ENCODE measurements at regions of chr16 and their contacts with region 1.

Region 1: DNA sequence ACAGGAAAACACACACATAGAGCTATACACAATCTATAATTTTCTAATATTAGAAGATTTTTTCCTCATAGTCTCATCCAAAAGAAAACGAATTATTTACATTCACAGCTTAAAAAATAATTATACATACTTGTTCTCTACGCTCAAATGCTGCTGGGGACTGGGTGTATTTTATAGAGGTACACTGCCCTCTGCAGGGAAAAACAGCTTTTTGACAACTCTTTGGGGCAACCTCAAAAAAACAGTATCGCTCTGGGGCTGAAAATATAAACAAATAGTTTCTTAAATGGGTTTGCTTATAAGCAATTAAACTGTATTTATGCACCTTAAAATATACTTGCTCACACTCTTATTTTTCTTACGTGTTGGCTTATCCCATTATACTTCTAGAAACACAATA is 261.8 kb upstream of the PSMD7 start:
- DNase-seq: no peak
- H3K4me3 ChIP-seq: no peak overlapping the region
- H3K27ac ChIP-seq: no peak overlapping the region
- H3K4me1 ChIP-seq: peaks cover 12 to 15% (median 14%) of the 10 kb centered on the region in 4 experiments; a peak in 6 of 7 replicates
- H3K27me3 ChIP-seq: no peaks in the 10 kb centered on the region
- CTCF ChIP-seq: peak in 2 of 3 experiments; percentile 48 to 56; a peak in 3 of 4 replicates
- EP300 ChIP-seq: no peak
- POLR2A ChIP-seq: no peak
- RAD21 ChIP-seq: peak; percentile 74 to 76

Region 2: GRCh38 chr16:73713778-73714495 is 320.9 kb before region 1 on chr16:
- CTCF ChIA-PET with region 1: interaction called, 15 read pairs
- POLR2A ChIA-PET with region 1: no interaction called
- DNase-seq: peak in 1 of 2 experiments; percentile 78
- H3K4me3 ChIP-seq: no peak overlapping the region
- H3K27ac ChIP-seq: no peak overlapping the region
- H3K4me1 ChIP-seq: peaks cover 0 to 8% (median 1%) of the 10 kb centered on the region in 4 experiments; a peak in 2 of 7 replicates
- H3K27me3 ChIP-seq: no peaks in the 10 kb centered on the region
- CTCF ChIP-seq: peak; percentile 46 to 73 (median 57)
- EP300 ChIP-seq: no peak
- POLR2A ChIP-seq: no peak
- RAD21 ChIP-seq: peak; percentile 53 to 60

Region 3: DNA sequence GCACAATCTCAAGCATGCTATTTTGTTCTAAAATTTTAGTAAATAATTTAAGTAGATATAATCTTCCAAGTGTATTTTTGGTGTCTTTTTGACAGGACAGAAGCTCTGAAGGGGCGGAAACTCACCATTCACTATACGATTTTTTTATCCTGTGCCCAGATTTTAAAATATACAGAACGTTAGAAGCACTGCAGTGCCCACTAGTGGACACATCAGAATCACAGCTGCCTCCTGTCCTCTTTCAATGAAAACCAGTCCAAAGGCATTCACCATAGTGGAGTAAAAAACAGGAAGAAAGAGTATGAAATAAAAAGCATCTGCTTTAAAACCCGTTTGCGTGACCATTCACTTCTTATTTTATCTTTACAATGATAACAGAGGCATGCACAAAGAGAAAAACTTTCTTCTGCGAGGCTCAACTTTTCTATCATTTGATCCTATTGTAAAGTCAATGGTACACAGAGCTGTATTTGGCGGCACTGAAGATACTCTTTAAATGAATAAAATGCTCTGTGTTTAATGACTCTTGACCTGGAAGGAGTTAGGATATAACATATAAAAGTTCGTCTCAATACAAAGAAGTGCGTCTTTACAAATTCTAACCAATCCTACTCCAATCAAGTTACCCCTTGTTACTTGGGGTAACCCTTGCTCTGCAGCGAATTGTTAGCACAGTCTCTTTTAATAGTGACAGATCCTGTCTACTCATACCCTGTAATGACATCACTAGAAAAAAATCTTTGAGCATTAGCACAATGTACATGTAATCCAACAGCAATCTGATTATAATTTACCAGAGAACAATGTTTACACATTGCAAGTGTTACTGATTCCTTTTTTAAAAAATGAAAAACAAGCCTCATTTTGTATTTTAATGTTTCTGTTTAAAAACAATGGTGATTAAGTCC is 78.0 kb before region 1 on chr16:
- CTCF ChIA-PET with region 1: interaction called, 24 read pairs
- POLR2A ChIA-PET with region 1: no interaction called
- DNase-seq: peak in 1 of 2 experiments; percentile 69
- H3K4me3 ChIP-seq: no peak overlapping the region
- H3K27ac ChIP-seq: no peak overlapping the region
- H3K4me1 ChIP-seq: no peaks in the 10 kb centered on the region
- H3K27me3 ChIP-seq: no peaks in the 10 kb centered on the region
- CTCF ChIP-seq: peak in 2 of 3 experiments; percentile 76 to 82; a peak in 3 of 4 replicates
- EP300 ChIP-seq: no peak
- POLR2A ChIP-seq: no peak
- RAD21 ChIP-seq: peak; percentile 85 to 90

Region 4: GRCh38 chr16:74046527-74046926 is 11.7 kb after region 1 on chr16:
- CTCF ChIA-PET with region 1: interaction called, 10 read pairs
- POLR2A ChIA-PET with region 1: no interaction called
- DNase-seq: no peak
- H3K4me3 ChIP-seq: no peak overlapping the region
- H3K27ac ChIP-seq: no peak overlapping the region
- H3K4me1 ChIP-seq: no peaks in the 10 kb centered on the region
- H3K27me3 ChIP-seq: no peaks in the 10 kb centered on the region
- CTCF ChIP-seq: no peak
- EP300 ChIP-seq: no peak
- POLR2A ChIP-seq: no peak
- RAD21 ChIP-seq: no peak

Region 5: DNA sequence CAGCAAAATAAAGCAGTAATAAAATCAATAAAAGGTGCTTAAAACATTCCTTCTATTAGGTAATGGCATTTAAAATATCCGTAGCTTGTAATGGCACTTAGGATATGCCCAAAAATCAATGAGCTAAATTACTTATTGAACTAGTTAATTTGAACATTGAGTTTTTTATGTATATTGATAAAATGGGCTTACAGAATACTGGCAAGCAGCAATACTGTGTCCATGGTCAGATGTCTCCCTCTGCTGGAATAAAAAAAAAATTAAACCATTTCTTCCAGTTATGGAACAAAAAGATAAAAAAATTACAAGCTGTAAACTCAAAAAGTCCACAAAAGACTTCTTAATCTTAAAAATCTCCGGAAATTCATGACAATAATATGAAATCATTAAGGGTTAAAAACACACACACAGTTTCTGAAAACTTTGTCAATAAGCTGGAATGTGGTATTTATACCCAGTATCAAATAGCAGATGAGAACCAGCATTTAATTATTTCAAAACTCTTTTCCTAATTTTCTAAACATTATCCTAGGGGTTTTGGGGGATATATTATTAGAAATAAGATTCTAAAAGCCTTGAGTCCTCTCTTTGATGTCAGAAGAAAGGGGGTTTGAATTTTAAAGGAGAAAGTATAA is 240.3 kb after region 1 on chr16:
- CTCF ChIA-PET with region 1: interaction called, 13 read pairs
- POLR2A ChIA-PET with region 1: no interaction called
- DNase-seq: no peak
- H3K4me3 ChIP-seq: peak overlapping the region in 1 of 4 experiments; percentile 8; a peak in 1 of 8 replicates
- H3K27ac ChIP-seq: no peak overlapping the region
- H3K4me1 ChIP-seq: peaks cover 0 to 6% (median under 1%) of the 10 kb centered on the region in 4 experiments; a peak in 3 of 7 replicates
- H3K27me3 ChIP-seq: no peaks in the 10 kb centered on the region
- CTCF ChIP-seq: peak in 2 of 3 experiments; percentile 16 to 26; a peak in 2 of 4 replicates
- EP300 ChIP-seq: no peak
- POLR2A ChIP-seq: no peak
- RAD21 ChIP-seq: peak; percentile 60 to 75

Measured in H1 (cell line).